CD4-positive, alpha-beta T cell (primary cell): ENCODE measurements at regions of chr1 and their contacts with region 1.

Region 1: GRCh38 chr1:150931773-150932172 is 5.6 kb downstream of the SETDB1 start:
- DNase-seq: peak in 1 of 14 experiments; percentile 32
- ATAC-seq: no peak
- H3K4me3 ChIP-seq: no peak overlapping the region
- H3K4me3 Mint-ChIP-seq: peak overlapping the region; percentile 72
- H3K27ac ChIP-seq: no peak overlapping the region
- H3K27ac Mint-ChIP-seq: no peak overlapping the region
- H3K4me1 ChIP-seq: peaks cover 8% of the 10 kb centered on the region
- H3K4me1 Mint-ChIP-seq: peaks cover 25% of the 10 kb centered on the region
- H3K27me3 ChIP-seq: no peaks in the 10 kb centered on the region
- H3K27me3 Mint-ChIP-seq: no peaks in the 10 kb centered on the region
- CTCF ChIP-seq: no peak

Region 2: GRCh38 chr1:150753416-150753815 is 178.4 kb before region 1 on chr1:
- CTCF ChIA-PET with region 1: no interaction called
- POLR2A ChIA-PET with region 1: interaction called, 4 read pairs
- intact Hi-C with region 1: loop called in 1 of 2 experiments (anchors 10 kb)
- DNase-seq: no peak
- ATAC-seq: no peak
- H3K4me3 ChIP-seq: no peak overlapping the region
- H3K4me3 Mint-ChIP-seq: no peak overlapping the region
- H3K27ac ChIP-seq: no peak overlapping the region
- H3K27ac Mint-ChIP-seq: no peak overlapping the region
- H3K4me1 ChIP-seq: no peaks in the 10 kb centered on the region
- H3K4me1 Mint-ChIP-seq: no peaks in the 10 kb centered on the region
- H3K27me3 ChIP-seq: no peaks in the 10 kb centered on the region
- H3K27me3 Mint-ChIP-seq: no peaks in the 10 kb centered on the region
- CTCF ChIP-seq: no peak

Region 3: GRCh38 chr1:151085953-151086559 is 154.3 kb after region 1 on chr1:
- CTCF ChIA-PET with region 1: no interaction called
- POLR2A ChIA-PET with region 1: no interaction called
- intact Hi-C with region 1: no loop called
- DNase-seq: no peak
- ATAC-seq: no peak
- H3K4me3 ChIP-seq: no peak overlapping the region
- H3K4me3 Mint-ChIP-seq: no peak overlapping the region
- H3K27ac ChIP-seq: no peak overlapping the region
- H3K27ac Mint-ChIP-seq: no peak overlapping the region
- H3K4me1 ChIP-seq: no peaks in the 10 kb centered on the region
- H3K4me1 Mint-ChIP-seq: no peaks in the 10 kb centered on the region
- H3K27me3 ChIP-seq: no peaks in the 10 kb centered on the region
- H3K27me3 Mint-ChIP-seq: no peaks in the 10 kb centered on the region
- CTCF ChIP-seq: no peak